ENCODE measurements at regions of chr5 and their contacts with region 1.

Region 1: DNA sequence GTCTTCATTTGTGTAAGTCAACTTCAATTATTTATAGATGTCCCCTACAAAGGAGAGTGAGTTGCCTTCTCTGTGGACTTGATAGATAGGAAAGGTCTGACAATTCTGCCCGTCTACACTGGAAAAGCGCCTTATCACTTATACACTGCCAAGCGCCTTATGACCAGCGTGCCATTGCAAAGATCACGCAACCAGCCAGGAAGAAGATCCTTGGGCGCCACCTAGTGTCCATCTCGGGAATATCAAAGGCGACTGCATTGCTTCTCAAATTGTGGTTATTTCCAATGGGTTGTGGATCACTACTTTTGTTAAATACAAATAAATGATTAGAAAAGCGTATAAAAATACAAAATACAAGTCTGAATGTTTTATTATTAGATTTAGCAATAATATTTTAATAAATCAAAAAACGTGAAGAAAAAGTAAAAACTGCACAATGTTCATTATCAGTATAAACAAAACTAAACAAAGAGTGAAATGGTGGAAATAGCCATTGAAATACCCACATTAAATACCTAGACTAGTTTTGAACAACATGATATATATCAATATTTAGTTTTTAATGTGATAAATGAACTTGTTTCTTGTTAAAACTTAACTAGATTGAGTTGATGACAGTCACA is 27.8 kb downstream of the SUB1 start:
- DNase-seq: peak; percentile 86
- H3K4me3 ChIP-seq: no peak overlapping the region
- H3K27ac ChIP-seq: no peak overlapping the region
- H3K4me1 ChIP-seq: peaks cover 0 to 14% (median 6%) of the 10 kb centered on the region in 4 donors
- H3K27me3 ChIP-seq: no peaks in the 10 kb centered on the region
- CTCF ChIP-seq: peak; percentile 80 to 94 (median 86)
- EP300 ChIP-seq: no peak
- POLR2A ChIP-seq: no peak

Region 2: GRCh38 chr5:31825518-31826068 is 787.6 kb before region 1 on chr5:
- intact Hi-C with region 1: loop called (anchors 10 kb)
- DNase-seq: peak; percentile 68
- H3K4me3 ChIP-seq: no peak overlapping the region
- H3K27ac ChIP-seq: no peak overlapping the region
- H3K4me1 ChIP-seq: no peaks in the 10 kb centered on the region
- H3K27me3 ChIP-seq: peaks cover 0 to 4% (median 0%) of the 10 kb centered on the region in 3 donors
- CTCF ChIP-seq: peak; percentile 25 to 59 (median 46)
- EP300 ChIP-seq: no peak
- POLR2A ChIP-seq: no peak

Region 3: DNA sequence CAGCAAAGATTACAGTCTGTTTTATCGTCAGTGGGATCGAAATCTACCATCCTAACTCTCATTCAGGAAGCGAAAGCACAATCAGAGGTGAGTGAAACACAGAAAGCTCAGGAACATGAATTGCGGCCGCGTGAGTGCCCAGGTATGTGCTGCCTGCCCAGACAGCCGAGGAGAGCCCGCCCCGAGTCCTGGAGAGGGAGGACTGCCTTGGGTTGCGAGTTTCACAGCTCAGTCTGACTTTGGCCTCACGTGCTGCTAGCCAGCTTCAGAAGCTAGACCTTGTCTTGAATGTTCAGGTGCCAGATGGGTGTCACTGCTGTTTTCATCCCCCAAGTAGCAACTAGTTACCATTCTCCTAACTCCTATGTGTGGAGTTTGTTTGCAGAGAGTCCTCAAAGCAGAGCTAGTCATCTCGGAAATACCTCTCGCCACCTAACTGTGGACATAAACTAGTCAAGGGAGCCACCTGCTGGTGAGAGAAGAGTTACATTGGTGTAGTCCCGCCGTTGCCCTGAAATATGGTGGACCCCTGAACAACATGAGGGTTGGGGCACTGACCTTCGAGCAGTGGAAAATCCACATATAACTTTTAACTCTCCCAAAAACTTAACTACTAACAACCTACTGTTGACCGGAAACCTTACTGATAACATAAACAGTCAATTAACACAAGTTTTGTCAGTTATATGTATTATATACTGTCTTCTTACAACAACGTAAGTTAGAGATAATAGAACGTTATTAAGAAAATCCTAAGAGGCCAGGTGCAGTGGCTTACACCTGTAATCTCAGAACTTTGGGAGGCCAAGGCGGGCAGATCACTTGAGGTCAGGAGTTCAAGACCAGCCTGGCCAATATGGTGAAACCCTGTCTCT is 520.0 kb before region 1 on chr5:
- intact Hi-C with region 1: loop called (anchors 10 kb)
- DNase-seq: peak; percentile 83
- H3K4me3 ChIP-seq: no peak overlapping the region
- H3K27ac ChIP-seq: no peak overlapping the region
- H3K4me1 ChIP-seq: peaks cover 0 to 19% (median 17%) of the 10 kb centered on the region in 4 donors
- H3K27me3 ChIP-seq: no peaks in the 10 kb centered on the region
- CTCF ChIP-seq: peak; percentile 65 to 74 (median 66)
- EP300 ChIP-seq: no peak
- POLR2A ChIP-seq: no peak

Region 4: DNA sequence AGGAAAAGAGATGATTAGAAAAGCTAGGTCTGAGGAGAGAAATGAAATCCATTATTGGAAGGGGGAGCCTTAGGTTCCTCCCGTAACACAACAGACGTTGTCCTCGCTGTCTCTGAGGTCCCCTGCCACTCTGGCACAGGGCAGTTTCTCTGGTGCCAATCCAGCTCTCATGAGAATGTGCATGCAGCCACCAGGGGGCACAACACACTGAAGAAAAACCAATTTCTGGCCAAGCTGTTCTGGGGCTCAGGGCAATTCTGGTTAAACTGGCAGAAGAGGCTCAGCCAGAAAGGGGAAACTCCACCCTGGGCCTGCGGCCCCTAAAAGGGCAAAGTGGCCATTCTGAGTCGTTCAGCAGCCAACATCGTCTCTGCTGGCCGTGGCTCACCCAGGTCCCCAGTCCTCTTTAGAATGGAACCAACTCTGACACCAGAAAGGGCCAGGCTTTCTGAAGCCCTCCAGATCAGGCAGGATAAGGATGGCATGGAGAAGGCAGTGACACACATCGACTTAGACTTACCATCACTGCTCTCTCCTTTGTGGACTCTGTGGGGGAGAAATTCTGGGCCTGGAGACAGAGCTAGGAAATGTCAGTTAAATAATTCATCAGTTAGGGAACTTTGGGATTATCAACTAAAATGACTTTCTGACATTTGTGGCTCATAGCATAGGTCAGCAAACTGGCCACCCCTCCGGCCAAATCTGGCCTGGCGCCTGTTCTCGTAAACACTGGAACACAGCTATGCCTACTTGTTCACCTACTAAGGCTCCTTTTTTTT is 380.5 kb before region 1 on chr5:
- intact Hi-C with region 1: loop called (anchors 5 kb)
- DNase-seq: peak; percentile 86
- H3K4me3 ChIP-seq: no peak overlapping the region
- H3K27ac ChIP-seq: peak overlapping the region; percentile 70 to 76 (median 74)
- H3K4me1 ChIP-seq: peaks cover 0 to 42% (median 32%) of the 10 kb centered on the region in 4 donors
- H3K27me3 ChIP-seq: no peaks in the 10 kb centered on the region
- CTCF ChIP-seq: peak; percentile 70 to 90 (median 76)
- EP300 ChIP-seq: no peak
- POLR2A ChIP-seq: no peak

Region 5: DNA sequence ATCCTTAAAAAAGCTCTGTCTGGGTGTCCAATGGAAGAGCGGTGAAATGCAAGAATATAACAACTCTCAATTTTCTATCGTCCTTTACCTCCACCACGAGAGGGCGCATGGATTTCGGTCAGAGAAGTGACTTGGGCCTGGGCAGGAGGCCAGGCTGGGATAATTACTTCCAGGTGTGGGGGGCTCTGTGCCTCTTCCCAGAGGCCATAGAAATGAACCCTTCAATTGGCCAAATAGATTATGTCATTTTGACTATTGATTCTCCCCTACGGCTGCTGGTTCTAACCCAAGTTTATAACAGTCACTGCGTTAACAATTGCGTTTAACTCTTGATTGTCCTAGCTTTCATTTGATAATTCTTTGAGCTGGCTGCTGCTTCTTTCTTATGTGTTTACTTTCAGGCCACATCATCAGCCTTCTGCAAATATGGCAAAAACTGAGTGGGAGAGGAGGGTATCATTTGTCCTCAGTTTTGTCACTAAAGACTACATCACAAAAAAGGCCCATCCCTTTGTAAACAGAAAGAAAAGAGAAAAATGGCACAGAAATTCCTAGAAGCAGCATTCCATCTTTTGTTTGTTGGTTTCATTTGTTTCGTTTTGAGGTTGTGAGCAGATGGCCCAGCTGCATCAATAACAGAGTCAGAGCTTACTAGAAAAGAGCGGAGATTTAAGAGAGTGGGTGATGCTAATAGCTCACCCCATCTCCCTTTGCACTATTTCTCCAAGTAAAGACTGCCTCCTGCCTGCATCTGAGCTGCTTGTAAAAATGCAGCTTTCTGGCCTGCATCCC is 123.2 kb before region 1 on chr5:
- intact Hi-C with region 1: loop called (anchors 1 kb)
- DNase-seq: peak; percentile 91
- H3K4me3 ChIP-seq: no peak overlapping the region
- H3K27ac ChIP-seq: peak overlapping the region in 1 of 4 donors; percentile 14
- H3K4me1 ChIP-seq: peaks cover 0 to 8% (median 1%) of the 10 kb centered on the region in 4 donors
- H3K27me3 ChIP-seq: no peaks in the 10 kb centered on the region
- CTCF ChIP-seq: peak; percentile 70 to 76 (median 72)
- EP300 ChIP-seq: no peak
- POLR2A ChIP-seq: no peak

Region 6: GRCh38 chr5:33423018-33423630 is 810.0 kb after region 1 on chr5:
- intact Hi-C with region 1: loop called (anchors 10 kb)
- DNase-seq: no peak
- H3K4me3 ChIP-seq: no peak overlapping the region
- H3K27ac ChIP-seq: no peak overlapping the region
- H3K4me1 ChIP-seq: peaks cover 0 to 18% (median 0%) of the 10 kb centered on the region in 4 donors
- H3K27me3 ChIP-seq: no peaks in the 10 kb centered on the region
- CTCF ChIP-seq: peak; percentile 12 to 49 (median 26)
- EP300 ChIP-seq: no peak
- POLR2A ChIP-seq: no peak